CD4-positive, alpha-beta T cell (primary cell): ENCODE measurements at regions of chr17 and their contacts with region 1.

Region 1: GRCh38 chr17:40287494-40288369 is at the start of gene CDC6:
- DNase-seq: peak; percentile 94 to 100 (median 97)
- ATAC-seq: peak; percentile 92
- H3K4me3 ChIP-seq: peak within 1 kb of the TSS; percentile 88
- H3K4me3 Mint-ChIP-seq: peak within 1 kb of the TSS; percentile 95
- H3K27ac ChIP-seq: no peak within 1 kb of the TSS
- H3K27ac Mint-ChIP-seq: peak within 1 kb of the TSS; percentile 60
- H3K4me1 ChIP-seq: peaks cover 24% of the 10 kb centered on the region
- H3K4me1 Mint-ChIP-seq: peaks cover 32% of the 10 kb centered on the region
- H3K27me3 ChIP-seq: no peaks in the 10 kb centered on the region
- H3K27me3 Mint-ChIP-seq: no peaks in the 10 kb centered on the region
- CTCF ChIP-seq: no peak
- total RNA-seq, gene CDC6: 1.0 to 1.8 TPM

Region 2: DNA sequence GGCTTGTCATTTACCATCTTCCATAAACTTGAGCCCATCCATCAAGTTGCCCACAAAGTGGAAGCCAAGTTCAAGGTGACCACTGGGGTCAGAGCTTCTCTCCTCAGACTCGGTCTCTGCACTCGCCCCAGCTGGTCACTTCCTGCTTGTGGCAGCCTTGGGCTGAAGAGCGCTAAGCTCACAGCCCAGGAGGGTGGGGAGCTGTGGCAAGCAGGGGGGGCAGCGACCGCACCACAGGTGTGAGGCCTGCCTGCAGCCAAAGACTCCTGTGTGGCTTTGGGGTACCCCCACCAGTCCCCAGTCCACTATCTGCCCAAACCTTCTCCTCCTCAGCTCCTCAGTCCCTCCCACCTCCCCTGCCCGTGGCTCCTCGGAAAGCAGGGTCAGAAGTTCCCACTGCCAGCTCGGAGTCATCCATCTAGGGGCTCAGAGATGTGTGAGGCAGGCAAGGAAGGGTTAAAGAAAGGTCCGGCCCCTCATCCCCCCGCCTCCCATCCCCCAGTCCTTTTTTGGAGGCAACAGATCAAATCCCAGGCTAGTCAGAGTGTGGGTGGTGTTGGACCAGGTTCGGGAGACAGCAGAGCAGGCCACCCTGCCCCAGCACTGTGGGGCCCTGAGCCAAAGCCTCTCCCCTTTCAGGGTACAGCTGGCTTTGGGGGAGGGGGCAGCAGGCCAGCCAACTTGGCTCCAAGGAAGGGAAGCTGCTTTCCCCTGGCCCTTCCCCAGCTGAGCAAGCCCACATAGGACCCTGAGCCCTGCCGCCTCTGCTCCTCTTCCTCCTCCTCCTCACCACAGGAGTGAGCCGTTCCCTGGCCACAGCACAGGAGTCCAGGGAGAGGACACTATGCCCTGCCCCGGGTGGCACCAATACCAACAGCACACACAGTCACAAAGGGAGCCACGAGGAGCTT is 269.3 kb before region 1 on chr17:
- CTCF ChIA-PET with region 1: no interaction called
- POLR2A ChIA-PET with region 1: no interaction called
- intact Hi-C with region 1: loop called (anchors 1 to 2 kb)
- DNase-seq: no peak
- ATAC-seq: no peak
- H3K4me3 ChIP-seq: no peak overlapping the region
- H3K4me3 Mint-ChIP-seq: no peak overlapping the region
- H3K27ac ChIP-seq: no peak overlapping the region
- H3K27ac Mint-ChIP-seq: no peak overlapping the region
- H3K4me1 ChIP-seq: peaks cover 5% of the 10 kb centered on the region
- H3K4me1 Mint-ChIP-seq: peaks cover 6% of the 10 kb centered on the region
- H3K27me3 ChIP-seq: no peaks in the 10 kb centered on the region
- H3K27me3 Mint-ChIP-seq: no peaks in the 10 kb centered on the region
- CTCF ChIP-seq: no peak

Region 3: DNA sequence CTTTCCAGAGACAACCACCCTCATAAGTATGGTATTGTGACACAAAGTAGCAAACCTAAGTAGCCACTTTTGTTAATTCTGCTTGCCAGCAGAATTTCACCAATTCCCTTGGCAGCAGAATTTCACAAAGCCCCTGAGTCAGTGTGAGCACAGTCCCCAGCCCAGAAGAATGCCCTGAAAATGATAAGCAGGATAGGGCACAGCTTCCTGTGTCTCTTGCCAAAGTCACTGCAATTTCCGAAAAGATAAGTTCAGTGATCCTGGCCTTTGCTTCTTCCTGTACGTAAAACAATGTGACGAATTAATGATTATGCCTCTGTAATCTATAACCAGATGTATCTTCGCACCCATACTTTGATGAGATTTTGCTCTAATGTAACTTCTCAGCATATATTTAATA is 84.6 kb before region 1 on chr17:
- CTCF ChIA-PET with region 1: interaction called, 5 read pairs
- POLR2A ChIA-PET with region 1: no interaction called
- intact Hi-C with region 1: loop called (anchors 1 kb)
- DNase-seq: no peak
- ATAC-seq: no peak
- H3K4me3 ChIP-seq: no peak overlapping the region
- H3K4me3 Mint-ChIP-seq: no peak overlapping the region
- H3K27ac ChIP-seq: no peak overlapping the region
- H3K27ac Mint-ChIP-seq: no peak overlapping the region
- H3K4me1 ChIP-seq: peaks cover 7% of the 10 kb centered on the region
- H3K4me1 Mint-ChIP-seq: peaks cover 5% of the 10 kb centered on the region
- H3K27me3 ChIP-seq: no peaks in the 10 kb centered on the region
- H3K27me3 Mint-ChIP-seq: peaks cover 9% of the 10 kb centered on the region
- CTCF ChIP-seq: no peak

Region 4: DNA sequence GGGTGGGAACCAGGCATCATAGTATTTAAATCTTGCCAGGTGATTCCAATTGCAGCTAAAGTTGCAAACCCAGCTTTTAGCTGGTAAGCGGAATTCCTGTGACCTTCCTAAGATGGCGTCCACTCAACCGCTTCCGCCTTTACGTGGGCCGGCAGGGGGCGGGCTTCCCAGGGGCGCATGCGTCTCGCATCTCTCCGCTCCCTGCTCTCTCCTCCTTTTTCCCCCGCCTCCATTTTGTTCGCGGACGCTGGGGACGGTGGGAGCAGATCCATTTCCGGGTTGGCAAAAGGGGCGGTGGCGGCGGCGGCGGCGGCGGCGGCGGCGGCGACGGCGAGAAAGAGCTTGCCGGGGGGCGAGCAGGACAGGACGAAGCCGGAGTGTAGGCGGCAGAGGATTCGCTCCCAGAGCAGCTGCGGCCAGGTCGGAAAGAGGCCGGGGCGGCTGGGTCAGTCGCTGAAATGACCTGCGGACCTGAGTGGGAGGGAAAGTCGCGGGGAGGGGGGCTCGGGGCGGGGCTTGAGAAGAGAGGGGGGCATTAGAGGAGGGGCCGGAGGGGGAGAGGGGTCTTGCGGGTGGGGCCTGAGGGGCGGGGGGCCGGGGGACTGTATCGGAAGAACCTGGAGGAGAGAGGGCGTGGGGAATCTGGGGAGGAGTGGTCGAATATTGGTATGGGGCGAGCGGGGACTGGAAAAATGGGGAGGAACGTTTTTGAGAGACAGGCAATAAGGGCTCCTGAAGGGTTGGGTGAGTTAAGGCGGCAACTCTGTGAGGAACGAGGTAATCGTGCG is 68.5 kb before region 1 on chr17 and contains the start of gene WIPF2:
- CTCF ChIA-PET with region 1: interaction called, 6 read pairs
- POLR2A ChIA-PET with region 1: interaction called, 7 read pairs
- intact Hi-C with region 1: loop called in 1 of 2 experiments (anchors 1 kb)
- DNase-seq: peak; percentile 91 to 98 (median 95)
- ATAC-seq: peak; percentile 90
- H3K4me3 ChIP-seq: peak within 1 kb of the TSS; percentile 58
- H3K4me3 Mint-ChIP-seq: peak within 1 kb of the TSS; percentile 94
- H3K27ac ChIP-seq: peak within 1 kb of the TSS; percentile 86 to 97
- H3K27ac Mint-ChIP-seq: peak within 1 kb of the TSS; percentile 88
- H3K4me1 ChIP-seq: peaks cover 25% of the 10 kb centered on the region
- H3K4me1 Mint-ChIP-seq: peaks cover 34% of the 10 kb centered on the region
- H3K27me3 ChIP-seq: no peaks in the 10 kb centered on the region
- H3K27me3 Mint-ChIP-seq: no peaks in the 10 kb centered on the region
- CTCF ChIP-seq: peak; percentile 62
- total RNA-seq, gene WIPF2: 17.3 to 21.3 TPM

Region 5: DNA sequence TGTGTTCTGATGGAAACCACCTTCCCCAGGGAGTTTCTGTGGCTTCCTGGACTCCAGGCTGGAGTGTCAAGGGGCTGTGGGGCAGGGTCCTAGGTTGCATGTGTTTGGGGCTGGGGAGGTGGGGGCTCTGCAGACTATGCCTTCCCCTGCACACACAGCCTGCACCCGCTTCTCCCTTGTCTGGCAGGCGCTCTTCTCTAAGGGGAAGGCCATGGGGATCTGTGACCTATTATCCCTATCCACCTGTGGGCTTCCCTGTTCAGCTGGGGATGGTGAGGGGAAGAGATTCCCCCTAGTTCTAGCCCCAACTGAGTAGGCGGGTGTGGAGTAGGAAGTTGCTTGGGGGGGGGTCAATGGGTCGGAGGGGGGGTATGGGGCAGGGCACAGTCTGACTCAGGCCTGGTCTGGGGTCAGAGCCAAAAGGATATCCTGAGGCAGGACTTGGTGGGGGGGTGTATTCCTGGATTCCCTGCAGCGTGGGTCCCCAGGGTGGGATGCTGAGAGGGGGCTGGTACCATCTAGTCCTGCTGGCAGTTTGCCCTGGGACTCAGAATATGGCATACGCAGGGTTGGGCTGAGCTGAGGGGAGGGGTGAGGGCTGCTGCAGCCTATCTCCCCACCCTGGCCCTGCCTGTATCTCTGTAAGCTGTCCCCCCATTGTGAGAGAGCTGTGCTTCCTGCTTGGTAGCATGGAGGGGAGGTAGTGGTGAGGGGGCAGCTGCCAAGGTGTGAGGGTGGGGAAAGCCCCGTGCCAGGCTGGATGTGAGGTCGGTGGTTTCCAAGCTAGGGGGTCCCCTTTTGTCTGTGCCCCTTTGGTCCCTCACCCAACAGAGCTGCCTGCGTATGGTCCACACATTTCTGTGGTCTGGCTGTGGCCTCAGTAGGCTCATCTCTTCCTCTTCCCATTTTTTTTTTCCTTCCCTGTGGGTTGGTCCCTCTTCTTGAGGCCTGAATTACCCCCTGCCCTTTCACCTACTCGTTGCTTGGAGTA is 36.0 kb after region 1 on chr17:
- CTCF ChIA-PET with region 1: no interaction called
- POLR2A ChIA-PET with region 1: interaction called, 3 read pairs
- intact Hi-C with region 1: loop called in 1 of 2 experiments (anchors 1 kb)
- DNase-seq: peak in 12 of 14 experiments; percentile 32 to 97 (median 60)
- ATAC-seq: peak; percentile 15
- H3K4me3 ChIP-seq: peak overlapping the region; percentile 96
- H3K4me3 Mint-ChIP-seq: peak overlapping the region; percentile 95
- H3K27ac ChIP-seq: peak overlapping the region; percentile 99
- H3K27ac Mint-ChIP-seq: peak overlapping the region; percentile 99
- H3K4me1 ChIP-seq: peaks cover 99% of the 10 kb centered on the region
- H3K4me1 Mint-ChIP-seq: peaks cover 98% of the 10 kb centered on the region
- H3K27me3 ChIP-seq: no peaks in the 10 kb centered on the region
- H3K27me3 Mint-ChIP-seq: no peaks in the 10 kb centered on the region
- CTCF ChIP-seq: no peak